ENCODE measurements at regions of chr2 and their contacts with region 1.

Region 1: GRCh38 chr2:85678794-85679672 is 11.0 kb upstream of the SFTPB start:
- DNase-seq: no peak
- H3K4me3 ChIP-seq: no peak overlapping the region
- CTCF ChIP-seq: peak; percentile 99

Region 2: GRCh38 chr2:85635636-85636035 is 43.4 kb before region 1 on chr2:
- CTCF ChIA-PET with region 1: interaction called, 19 read pairs
- POLR2A ChIA-PET with region 1: no interaction called
- DNase-seq: no peak
- H3K4me3 ChIP-seq: no peak overlapping the region
- CTCF ChIP-seq: no peak

Region 3: DNA sequence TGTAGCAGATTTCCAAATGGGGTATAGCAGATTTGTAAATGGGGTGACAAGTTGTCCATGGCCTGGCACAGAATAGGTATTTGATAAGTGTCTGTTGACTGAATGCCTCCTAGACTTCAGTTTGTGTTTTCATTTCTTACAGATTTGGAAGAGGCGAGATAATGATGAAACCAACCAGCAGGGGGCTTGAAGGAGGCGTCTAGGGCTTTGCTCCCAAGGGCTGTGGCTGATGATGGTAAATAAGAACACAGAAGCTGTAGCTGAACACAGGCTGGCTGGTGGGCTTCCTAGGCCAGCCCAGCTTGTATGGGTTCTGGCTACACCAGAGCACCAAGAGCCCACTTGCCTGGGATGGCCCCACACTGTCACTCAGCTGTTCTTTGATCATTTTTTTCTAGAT is 30.4 kb before region 1 on chr2:
- CTCF ChIA-PET with region 1: interaction called, 17 read pairs
- POLR2A ChIA-PET with region 1: no interaction called
- DNase-seq: no peak
- H3K4me3 ChIP-seq: no peak overlapping the region
- CTCF ChIP-seq: peak; percentile 65

Region 4: GRCh38 chr2:85663594-85664565 is 15.2 kb before region 1 on chr2:
- CTCF ChIA-PET with region 1: interaction called, 32 read pairs
- POLR2A ChIA-PET with region 1: no interaction called
- DNase-seq: no peak
- H3K4me3 ChIP-seq: no peak overlapping the region
- CTCF ChIP-seq: no peak

Region 5: DNA sequence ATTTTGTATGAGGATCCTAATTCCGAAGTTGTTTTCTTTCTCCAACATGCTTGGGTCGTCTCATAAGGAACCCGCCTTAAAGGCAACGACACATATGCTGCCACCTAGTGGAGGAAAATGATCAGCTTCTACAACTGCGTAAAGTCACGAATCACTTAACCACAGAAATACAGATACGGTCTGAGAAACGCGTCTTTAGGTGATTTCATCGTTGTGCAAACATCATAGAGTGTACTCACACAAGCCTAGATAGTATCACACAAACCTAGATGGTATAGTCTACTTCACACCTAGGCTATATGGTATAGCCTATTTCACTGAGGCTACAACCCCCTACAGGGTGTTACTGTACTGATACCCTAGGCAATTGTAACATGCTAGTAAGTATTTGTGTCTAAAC is 28.3 kb after region 1 on chr2:
- CTCF ChIA-PET with region 1: interaction called, 207 read pairs
- POLR2A ChIA-PET with region 1: no interaction called
- DNase-seq: no peak
- H3K4me3 ChIP-seq: no peak overlapping the region
- CTCF ChIP-seq: peak; percentile 76

Region 6: DNA sequence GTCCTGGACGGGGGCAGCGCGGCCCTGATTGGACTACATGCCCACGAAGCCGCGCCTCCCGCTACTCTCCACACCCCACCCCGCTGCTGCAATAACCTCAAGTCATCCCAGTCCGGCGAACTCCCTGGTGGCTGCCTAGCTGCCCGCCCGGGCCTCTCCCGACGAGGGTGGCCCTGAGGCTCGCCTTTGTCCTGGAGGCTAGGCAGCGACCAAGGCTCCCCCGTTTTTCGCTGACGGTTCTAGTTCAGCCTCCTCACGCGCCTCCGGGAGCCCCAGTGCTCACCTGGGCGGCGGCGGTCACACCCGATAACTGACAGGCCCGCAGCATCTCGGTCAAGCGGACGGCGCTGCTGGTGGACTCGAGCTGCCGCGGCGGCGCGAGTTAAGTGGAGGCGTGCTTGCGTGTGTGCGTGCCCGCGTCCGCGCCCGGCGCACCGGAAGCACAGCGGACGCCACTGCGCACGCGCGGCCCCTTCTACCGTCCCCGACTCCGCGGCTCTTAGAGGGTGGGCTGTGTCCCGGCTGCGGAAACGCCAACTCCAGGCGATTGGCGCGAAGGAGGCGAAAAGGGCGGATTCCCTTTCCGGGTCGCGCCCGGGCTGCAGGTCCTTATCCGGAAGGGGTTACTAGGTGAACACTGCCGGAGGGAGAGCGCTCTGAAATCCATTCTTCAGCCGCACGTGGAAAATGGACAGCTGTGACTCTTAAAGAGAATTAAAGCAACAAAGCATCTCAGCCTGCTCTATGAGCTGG is 516.2 kb after region 1 on chr2 and contains the start of gene IMMT:
- CTCF ChIA-PET with region 1: no interaction called
- POLR2A ChIA-PET with region 1: no interaction called
- DNase-seq: peak; percentile 74
- H3K4me3 ChIP-seq: peak within 1 kb of the TSS; percentile 100
- CTCF ChIP-seq: no peak